T-cell (primary cell): ENCODE measurements at regions of chr9 and their contacts with region 1.

Region 1: GRCh38 chr9:21174671-21175070 is 8.2 kb upstream of the IFNA21 start:
- DNase-seq: no peak
- ATAC-seq: no peak
- H3K4me3 ChIP-seq: no peak overlapping the region
- H3K4me3 Mint-ChIP-seq: no peak overlapping the region
- H3K27ac ChIP-seq: no peak overlapping the region
- H3K27ac Mint-ChIP-seq: no peak overlapping the region
- H3K4me1 ChIP-seq: no peaks in the 10 kb centered on the region
- H3K4me1 Mint-ChIP-seq: no peaks in the 10 kb centered on the region
- H3K27me3 ChIP-seq: no peaks in the 10 kb centered on the region
- H3K27me3 Mint-ChIP-seq: peaks cover 0 to 5% of the 10 kb centered on the region in 2 donors

Region 2: GRCh38 chr9:21340735-21341134 is 166.1 kb after region 1 on chr9:
- CTCF ChIA-PET with region 1: interaction called in 1 of 2 experiments, 16 read pairs
- POLR2A ChIA-PET with region 1: no interaction called
- DNase-seq: no peak
- ATAC-seq: no peak
- H3K4me3 ChIP-seq: no peak overlapping the region
- H3K4me3 Mint-ChIP-seq: no peak overlapping the region
- H3K27ac ChIP-seq: no peak overlapping the region
- H3K27ac Mint-ChIP-seq: no peak overlapping the region
- H3K4me1 ChIP-seq: no peaks in the 10 kb centered on the region
- H3K4me1 Mint-ChIP-seq: peaks cover 10% of the 10 kb centered on the region in 3 donors
- H3K27me3 ChIP-seq: no peaks in the 10 kb centered on the region
- H3K27me3 Mint-ChIP-seq: peaks cover 24 to 41% of the 10 kb centered on the region in 2 donors